ENCODE measurements at regions of chr19 and their contacts with region 1.

Region 1: DNA sequence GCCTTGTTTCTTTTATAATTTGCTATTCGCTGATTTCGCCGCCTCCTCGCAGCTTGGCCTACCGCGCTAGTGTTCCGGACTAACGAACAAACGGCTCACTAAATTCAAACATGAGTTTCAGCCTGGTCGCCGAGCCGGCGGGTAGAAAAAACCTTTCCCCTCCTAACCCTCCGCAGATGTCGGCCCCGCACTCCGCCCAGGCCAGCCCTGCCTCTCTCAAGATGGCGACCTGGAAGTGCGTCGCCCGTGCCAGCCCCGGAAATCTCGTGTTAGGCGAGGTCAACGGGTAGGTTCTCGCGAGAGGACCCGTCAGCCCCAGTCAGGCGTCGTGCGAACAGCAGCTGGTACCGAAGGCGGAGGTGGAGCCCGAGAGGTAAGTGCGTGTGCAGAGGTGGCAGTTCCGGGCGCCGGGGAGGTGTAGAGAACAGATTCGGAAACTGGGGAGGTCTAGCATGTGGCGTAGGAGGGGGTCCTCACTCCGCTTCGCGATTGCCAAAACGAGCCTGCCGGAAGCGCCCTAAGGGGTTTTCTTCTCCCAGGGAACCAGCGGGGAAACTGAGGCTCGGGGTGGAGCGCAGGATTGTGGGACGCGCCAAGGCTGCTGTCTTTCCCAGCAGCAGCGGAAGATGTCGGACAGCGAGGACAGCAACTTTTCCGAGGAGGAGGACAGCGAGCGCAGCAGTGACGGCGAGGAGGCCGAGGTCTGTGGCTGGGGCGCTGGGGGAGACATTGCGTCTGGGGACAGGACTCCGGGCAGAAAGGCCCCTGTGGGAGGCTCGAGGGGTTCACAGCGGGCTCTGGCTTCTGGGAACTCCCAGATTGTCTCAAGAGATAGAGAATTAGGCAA is at the start of gene SUPT5H:
- DNase-seq: peak; percentile 83
- H3K4me3 ChIP-seq: peak within 1 kb of the TSS; percentile 90
- H3K27me3 ChIP-seq: no peaks in the 10 kb centered on the region
- CTCF ChIP-seq: no peak
- polyA plus RNA-seq, gene SUPT5H: 55.2 and 81.8 TPM in 2 replicates

Region 2: GRCh38 chr19:39474139-39474622 is 28.7 kb after region 1 on chr19:
- CTCF ChIA-PET with region 1: interaction called, 18 read pairs
- POLR2A ChIA-PET with region 1: no interaction called
- DNase-seq: no peak
- H3K4me3 ChIP-seq: no peak overlapping the region
- H3K27me3 ChIP-seq: no peaks in the 10 kb centered on the region
- CTCF ChIP-seq: peak; percentile 93